ENCODE measurements at regions of chr19 and their contacts with region 1.

Region 1: DNA sequence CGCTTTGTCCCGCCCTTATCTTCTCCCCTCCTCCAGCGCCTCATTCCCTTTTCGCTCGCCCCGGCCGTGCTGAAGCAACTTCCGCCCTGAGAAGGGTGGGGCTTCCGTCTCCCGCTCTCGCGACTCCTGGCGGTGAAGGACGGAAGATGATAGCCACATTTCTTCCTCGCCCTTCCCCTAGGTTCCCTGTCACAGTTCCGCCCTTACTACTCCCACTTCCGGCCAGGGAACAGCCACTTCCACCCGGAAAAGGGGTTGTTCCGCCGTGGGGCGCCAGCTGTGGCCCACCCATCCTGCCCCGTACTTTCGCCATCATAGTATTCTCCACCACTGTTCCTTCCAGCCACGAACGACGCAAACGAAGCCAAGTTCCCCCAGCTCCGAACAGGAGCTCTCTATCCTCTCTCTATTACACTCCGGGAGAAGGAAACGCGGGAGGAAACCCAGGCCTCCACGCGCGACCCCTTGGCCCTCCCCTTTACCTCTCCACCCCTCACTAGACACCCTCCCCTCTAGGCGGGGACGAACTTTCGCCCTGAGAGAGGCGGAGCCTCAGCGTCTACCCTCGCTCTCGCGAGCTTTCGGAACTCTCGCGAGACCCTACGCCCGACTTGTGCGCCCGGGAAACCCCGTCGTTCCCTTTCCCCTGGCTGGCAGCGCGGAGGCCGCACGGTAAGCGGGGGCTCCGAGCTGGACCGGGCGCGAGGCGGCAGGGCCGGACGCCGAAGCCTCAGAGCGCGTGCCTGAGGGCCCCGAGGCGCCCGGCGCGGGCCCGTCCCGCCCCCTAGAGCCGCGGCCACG is at the start of gene RPS19:
- DNase-seq: peak; percentile 94 to 99 (median 98)
- ATAC-seq: peak; percentile 82 to 86
- H3K4me3 Mint-ChIP-seq: peak within 1 kb of the TSS; percentile 80 to 100 (median 95)
- H3K27ac Mint-ChIP-seq: peak within 1 kb of the TSS; percentile 84 to 99 (median 97)
- H3K4me1 Mint-ChIP-seq: peaks cover 28 to 52% (median 44%) of the 10 kb centered on the region in 4 donors
- H3K27me3 Mint-ChIP-seq: no peaks in the 10 kb centered on the region
- polyA plus RNA-seq, gene RPS19: 6,905 to 8,825 (median 8,505) TPM

Region 2: GRCh38 chr19:41746593-41747227 is 113.1 kb before region 1 on chr19:
- POLR2A ChIA-PET with region 1: no interaction called
- DNase-seq: peak; percentile 8 to 70 (median 29)
- ATAC-seq: peak; percentile 86 to 87
- H3K4me3 Mint-ChIP-seq: no peak overlapping the region
- H3K27ac Mint-ChIP-seq: no peak overlapping the region
- H3K4me1 Mint-ChIP-seq: peaks cover 3 to 22% (median 6%) of the 10 kb centered on the region in 4 donors
- H3K27me3 Mint-ChIP-seq: peaks cover 34 to 75% (median 53%) of the 10 kb centered on the region in 5 donors

Region 3: GRCh38 chr19:41844601-41845000 is 15.2 kb before region 1 on chr19 and contains the start of gene LYPD4:
- POLR2A ChIA-PET with region 1: no interaction called
- DNase-seq: no peak
- ATAC-seq: no peak
- H3K4me3 Mint-ChIP-seq: no peak within 1 kb of the TSS
- H3K27ac Mint-ChIP-seq: peak within 1 kb of the TSS in 1 of 10 donors; percentile 50
- H3K4me1 Mint-ChIP-seq: peaks cover 0 to 4% (median 0%) of the 10 kb centered on the region in 4 donors
- H3K27me3 Mint-ChIP-seq: peaks cover 0 to 5% (median 0%) of the 10 kb centered on the region in 5 donors
- polyA plus RNA-seq, gene LYPD4: not detected

Region 4: DNA sequence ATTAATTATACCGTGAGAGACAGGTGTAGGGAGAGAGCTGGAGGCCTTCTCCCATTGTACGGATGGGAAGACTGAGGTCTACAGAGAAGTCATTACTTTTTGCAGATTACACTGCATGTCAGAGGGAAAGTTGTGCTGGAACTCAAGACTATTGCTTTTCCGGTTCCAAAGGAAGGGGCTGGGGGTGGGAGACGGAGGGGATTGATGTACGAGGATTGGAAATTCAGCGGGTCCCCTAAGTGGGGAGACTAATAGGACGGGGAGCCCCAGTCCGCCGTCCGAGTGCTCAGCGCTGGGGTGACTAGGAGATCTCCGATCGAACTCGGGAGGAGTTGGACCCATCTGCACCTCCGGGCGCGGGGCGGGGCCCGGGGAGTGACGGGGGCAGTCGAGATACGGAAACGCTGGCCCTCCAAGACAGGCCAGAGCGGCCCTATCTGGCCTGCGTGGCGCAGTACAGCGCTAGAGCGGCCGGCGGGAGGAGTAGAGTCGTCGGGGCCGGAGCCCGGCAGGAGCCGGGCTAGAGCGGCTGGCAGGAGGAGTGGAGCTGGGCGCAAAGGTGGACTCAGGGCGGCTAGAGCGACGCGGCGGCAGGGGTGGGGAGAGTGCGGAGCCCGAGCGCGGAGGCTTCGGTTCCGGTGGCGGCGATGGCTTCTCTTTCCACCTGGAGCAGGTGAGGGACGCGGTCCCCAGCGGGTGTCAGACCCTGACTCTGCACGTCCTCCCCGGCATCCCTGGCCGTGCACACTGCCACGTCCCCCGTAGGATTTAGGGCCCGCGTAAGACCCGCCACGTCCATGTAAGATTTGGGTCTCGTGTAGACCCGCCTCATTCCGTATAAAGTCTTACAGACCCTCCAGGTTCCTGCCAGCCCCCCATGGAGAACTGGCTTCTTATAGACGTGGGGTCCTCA is 24.3 kb after region 1 on chr19:
- POLR2A ChIA-PET with region 1: interaction called, 819 read pairs
- DNase-seq: peak; percentile 72 to 94 (median 84)
- ATAC-seq: peak; percentile 46 to 51
- H3K4me3 Mint-ChIP-seq: peak overlapping the region; percentile 94 to 99 (median 97)
- H3K27ac Mint-ChIP-seq: peak overlapping the region; percentile 94 to 100 (median 99)
- H3K4me1 Mint-ChIP-seq: peaks cover 35 to 72% (median 49%) of the 10 kb centered on the region in 4 donors
- H3K27me3 Mint-ChIP-seq: peaks cover 0 to 1% (median 0%) of the 10 kb centered on the region in 5 donors

Region 5: DNA sequence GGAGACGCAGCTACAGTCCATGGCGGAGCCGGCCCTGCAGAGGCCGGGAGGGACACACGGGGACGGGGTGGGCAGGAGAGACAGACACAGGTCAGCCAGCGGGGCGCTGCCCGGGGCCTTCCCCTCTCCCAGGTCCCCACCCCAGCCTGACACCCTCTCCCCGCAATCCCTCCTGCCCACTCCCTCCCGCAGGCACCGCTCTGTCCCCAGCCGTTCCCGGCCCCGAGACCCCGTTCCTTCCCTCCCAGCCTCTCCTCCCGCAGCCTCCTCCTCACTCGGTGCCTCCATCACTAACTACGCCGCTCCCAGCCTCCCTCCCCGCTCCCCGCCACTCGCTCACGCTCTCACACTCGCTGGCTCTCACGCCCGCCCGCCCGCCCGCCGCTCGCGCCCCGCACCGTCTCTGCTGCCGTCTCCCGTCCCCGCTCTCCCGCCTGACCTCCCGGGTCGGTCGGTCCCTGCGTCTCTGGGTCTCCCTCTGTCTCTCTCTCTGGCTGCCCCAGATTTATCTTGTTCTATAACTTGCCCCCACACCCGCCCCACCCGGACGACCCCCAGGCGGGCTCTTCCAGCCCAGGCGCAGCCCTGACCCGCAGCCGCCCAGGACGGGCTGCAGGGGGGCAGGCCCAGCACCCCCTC is 53.2 kb after region 1 on chr19:
- POLR2A ChIA-PET with region 1: interaction called, 11 read pairs
- DNase-seq: peak in 5 of 10 donors; percentile 31 to 64 (median 38)
- ATAC-seq: peak; percentile 27 to 32
- H3K4me3 Mint-ChIP-seq: peak overlapping the region in 9 of 10 donors; percentile 36 to 86 (median 55)
- H3K27ac Mint-ChIP-seq: peak overlapping the region in 5 of 10 donors; percentile 31 to 92 (median 85)
- H3K4me1 Mint-ChIP-seq: peaks cover 34 to 57% (median 42%) of the 10 kb centered on the region in 4 donors
- H3K27me3 Mint-ChIP-seq: peaks cover 0 to 3% (median 0%) of the 10 kb centered on the region in 5 donors

Region 6: GRCh38 chr19:41945135-41945766 is 85.4 kb after region 1 on chr19:
- POLR2A ChIA-PET with region 1: interaction called, 41 read pairs
- DNase-seq: peak; percentile 51 to 97 (median 92)
- ATAC-seq: peak; percentile 87 to 90
- H3K4me3 Mint-ChIP-seq: peak overlapping the region; percentile 27 to 80 (median 74)
- H3K27ac Mint-ChIP-seq: peak overlapping the region; percentile 97 to 99 (median 98)
- H3K4me1 Mint-ChIP-seq: peaks cover 38 to 74% (median 60%) of the 10 kb centered on the region in 4 donors
- H3K27me3 Mint-ChIP-seq: no peaks in the 10 kb centered on the region

Region 7: DNA sequence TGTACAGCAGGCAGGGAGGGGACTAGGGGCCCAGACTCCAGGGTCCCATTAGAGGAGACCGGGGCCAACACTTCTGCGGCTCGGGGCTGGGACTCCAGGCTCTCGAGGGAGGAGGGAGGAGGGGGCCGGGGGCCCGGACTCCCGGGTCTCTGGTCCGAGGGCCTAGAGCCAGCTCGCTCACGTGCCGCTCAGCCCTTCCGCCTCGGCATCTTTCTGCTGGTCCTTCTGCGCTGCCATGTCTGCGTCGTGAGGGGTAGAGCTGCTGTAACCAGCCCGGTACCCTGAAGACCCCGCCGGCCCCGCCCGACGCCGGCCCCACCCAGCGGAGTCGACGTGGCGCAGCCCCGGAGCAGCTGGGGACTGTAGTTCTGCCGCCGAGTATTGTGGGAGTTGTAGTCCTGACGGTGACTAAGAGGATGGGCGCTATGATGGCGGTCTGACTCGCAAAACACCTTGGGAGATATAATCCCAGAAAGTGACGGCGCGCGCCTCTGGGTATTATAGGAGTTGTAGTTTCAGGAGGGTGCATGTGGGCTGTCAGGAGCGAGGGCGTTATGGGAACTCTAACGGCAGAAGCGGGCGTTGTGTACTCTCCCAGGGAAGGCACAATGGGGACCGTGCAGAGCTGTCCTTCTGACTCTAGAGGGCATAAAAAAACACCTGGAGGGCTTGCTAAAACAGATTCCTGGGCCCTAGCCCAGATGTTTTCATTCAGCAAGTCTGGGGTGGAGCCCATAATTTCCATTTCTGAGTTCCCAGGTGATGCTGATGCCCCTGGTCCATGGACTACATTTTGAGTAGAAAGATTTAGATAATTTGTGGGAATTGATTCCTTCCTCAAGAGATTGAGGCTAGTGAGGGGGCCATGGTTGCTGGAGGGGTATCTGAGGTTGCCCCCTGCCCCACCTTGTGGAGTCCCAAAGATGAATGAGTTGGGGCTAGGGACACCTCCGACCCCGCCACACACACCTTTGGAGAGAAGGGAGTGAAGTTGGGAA is 99.5 kb after region 1 on chr19 and contains the start of gene RABAC1:
- POLR2A ChIA-PET with region 1: interaction called, 45 read pairs
- DNase-seq: peak; percentile 76 to 93 (median 85)
- ATAC-seq: peak; percentile 91 to 92
- H3K4me3 Mint-ChIP-seq: peak within 1 kb of the TSS; percentile 79 to 99 (median 97)
- H3K27ac Mint-ChIP-seq: peak within 1 kb of the TSS; percentile 64 to 96 (median 92)
- H3K4me1 Mint-ChIP-seq: peaks cover 16 to 22% (median 20%) of the 10 kb centered on the region in 4 donors
- H3K27me3 Mint-ChIP-seq: no peaks in the 10 kb centered on the region
- polyA plus RNA-seq, gene RABAC1: 201 to 288 (median 231) TPM